ENCODE measurements at regions of chr17 and their contacts with region 1.

Region 1: DNA sequence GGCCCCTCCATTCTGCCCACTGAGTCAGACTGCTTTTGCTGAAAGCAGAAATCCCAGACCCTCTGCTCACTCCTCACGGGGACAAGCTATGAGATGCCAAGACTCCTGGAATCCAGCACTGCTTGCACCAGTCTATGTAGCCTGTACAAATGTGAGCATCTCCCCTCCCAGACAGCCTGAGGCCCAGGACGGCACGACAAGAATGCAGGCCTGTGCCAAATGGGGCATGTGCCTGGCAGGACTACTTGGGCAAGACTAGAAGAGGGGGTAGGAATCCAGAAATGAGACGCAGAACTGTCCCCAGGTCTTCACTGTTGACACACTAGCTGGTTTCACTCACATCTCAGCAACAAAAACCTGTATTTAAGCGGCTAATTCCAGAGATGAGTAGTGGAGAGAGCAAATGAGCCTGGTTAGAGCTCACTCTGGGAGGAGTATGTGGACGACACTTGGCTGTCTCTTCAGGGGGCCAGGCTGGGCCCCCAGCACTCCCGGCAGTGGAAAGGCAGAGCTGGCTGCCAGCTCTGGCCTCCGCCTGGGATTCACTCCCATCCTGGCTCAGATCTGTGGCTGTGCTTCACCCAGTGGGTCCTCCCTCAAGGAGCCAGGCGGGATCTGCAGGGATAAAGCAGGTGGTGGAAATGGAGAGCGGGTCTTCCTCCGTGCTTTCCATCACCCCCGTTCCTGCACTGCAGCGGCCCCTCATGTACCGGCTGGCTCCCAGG is 2.9 kb upstream of the MYO1C start:
- H3K4me3 ChIP-seq: no peak overlapping the region
- H3K27ac ChIP-seq: no peak overlapping the region
- H3K4me1 ChIP-seq: 0 out of 2 replicates have a peak, but pooled peaks cover 3% of the 10 kb centered on the region
- CTCF ChIP-seq: no peak

Region 2: DNA sequence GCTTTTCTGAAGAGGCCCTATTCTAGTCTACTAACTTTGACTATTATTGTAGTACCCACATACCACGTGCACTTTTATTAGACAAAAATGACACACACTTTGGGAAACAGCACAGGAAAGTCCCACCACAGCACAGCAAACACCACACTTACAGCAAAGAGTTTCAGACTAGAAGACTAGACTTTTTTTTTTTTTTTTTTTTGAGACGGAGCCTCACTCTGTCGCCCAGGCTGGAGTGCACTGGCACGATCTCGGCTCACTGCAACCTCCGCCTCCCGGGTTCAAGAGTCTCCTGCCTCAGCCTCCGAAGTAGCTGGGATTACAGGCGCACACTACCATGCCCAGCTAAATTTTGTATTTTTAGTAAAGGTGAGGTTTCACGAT is 115.5 kb before region 1 on chr17:
- CTCF ChIA-PET with region 1: no interaction called
- POLR2A ChIA-PET with region 1: no interaction called
- H3K4me3 ChIP-seq: no peak overlapping the region
- H3K27ac ChIP-seq: peak overlapping the region; percentile 1
- H3K4me1 ChIP-seq: peaks cover 68% of the 10 kb centered on the region
- CTCF ChIP-seq: no peak

Region 3: DNA sequence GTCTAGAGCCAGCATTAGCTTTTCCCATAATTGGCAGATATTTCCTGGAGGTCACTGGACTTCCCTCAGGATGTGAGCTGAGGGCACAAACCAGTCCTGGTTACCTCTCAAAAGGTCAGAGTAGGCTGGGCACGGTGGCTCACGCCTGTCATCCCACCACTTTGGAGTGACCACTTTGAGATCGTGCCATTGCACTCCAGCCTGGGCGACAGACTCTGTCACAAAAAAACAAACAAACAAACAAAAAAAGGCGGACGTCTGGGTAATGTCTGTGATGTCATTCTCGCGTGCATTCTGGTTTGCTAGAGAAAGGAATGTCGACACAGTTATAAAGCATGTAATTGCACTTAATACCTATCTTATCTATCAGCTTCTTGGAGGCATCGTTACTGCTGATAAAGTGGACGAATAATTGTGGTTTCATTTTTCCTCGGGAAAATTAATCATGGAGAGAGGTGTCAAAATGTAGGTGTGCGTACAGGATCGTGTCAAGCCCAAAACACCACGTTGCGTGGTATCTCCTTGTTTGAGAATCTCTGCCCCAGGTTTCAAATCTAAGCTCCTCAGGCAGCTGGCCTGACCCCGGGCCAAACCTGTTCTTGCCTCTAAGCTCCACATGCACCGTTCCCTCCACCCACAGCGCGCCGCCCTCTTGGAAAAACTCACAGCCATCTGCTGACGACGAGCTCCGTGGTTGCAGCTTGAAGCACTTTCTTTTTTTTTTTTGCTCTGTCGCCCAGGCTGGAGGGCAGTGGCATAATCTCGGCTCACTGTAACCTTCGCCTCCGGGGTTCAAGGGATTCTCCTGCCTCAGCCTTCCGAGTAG is 32.9 kb before region 1 on chr17:
- CTCF ChIA-PET with region 1: no interaction called
- POLR2A ChIA-PET with region 1: interaction called, 11 read pairs
- H3K4me3 ChIP-seq: no peak overlapping the region; the same call in 1 of the 2 replicates
- H3K27ac ChIP-seq: peak overlapping the region; percentile 62
- H3K4me1 ChIP-seq: peaks cover 4% of the 10 kb centered on the region
- CTCF ChIP-seq: peak; percentile 41

Region 4: GRCh38 chr17:1474402-1475189 is 20.8 kb before region 1 on chr17:
- CTCF ChIA-PET with region 1: no interaction called
- POLR2A ChIA-PET with region 1: interaction called, 11 read pairs
- H3K4me3 ChIP-seq: no peak overlapping the region
- H3K27ac ChIP-seq: no peak overlapping the region
- H3K4me1 ChIP-seq: no peaks in the 10 kb centered on the region
- CTCF ChIP-seq: no peak